ENCODE measurements at regions of chr12 and their contacts with region 1.

Region 1: GRCh38 chr12:119412811-119413794 is 78.6 kb downstream of the CCDC60 start:
- DNase-seq: peak; percentile 70
- ATAC-seq: no peak
- H3K4me3 Mint-ChIP-seq: no peak overlapping the region
- H3K27ac Mint-ChIP-seq: no peak overlapping the region
- H3K4me1 Mint-ChIP-seq: no peaks in the 10 kb centered on the region
- H3K27me3 Mint-ChIP-seq: peaks cover 18% of the 10 kb centered on the region

Region 2: DNA sequence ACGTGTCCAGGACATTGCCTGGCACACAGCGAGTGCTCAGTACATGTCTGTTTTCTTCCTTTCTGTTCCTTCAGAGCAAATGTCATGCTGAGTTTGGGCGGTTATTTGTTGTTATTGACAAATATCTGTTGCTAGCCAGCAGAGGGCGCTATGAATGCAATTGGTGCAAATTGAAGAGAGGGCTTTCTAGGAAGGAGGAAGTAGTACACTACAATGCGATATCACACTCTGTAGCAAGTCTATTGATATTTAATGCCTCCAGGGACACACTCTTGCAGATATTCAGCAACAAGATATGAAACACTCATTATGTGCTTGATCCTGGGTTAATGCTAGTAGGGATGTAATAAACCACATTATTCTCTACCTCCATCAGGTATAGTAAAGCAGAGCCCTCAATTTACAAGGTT is 699.0 kb before region 1 on chr12:
- CTCF ChIA-PET with region 1: no interaction called
- POLR2A ChIA-PET with region 1: no interaction called
- intact Hi-C with region 1: loop called in 1 of 2 experiments (anchors 10 kb)
- DNase-seq: peak; percentile 59
- ATAC-seq: no peak
- H3K4me3 Mint-ChIP-seq: no peak overlapping the region
- H3K27ac Mint-ChIP-seq: no peak overlapping the region
- H3K4me1 Mint-ChIP-seq: no peaks in the 10 kb centered on the region
- H3K27me3 Mint-ChIP-seq: peaks cover 2% of the 10 kb centered on the region

Region 3: GRCh38 chr12:118979763-118980406 is 433.2 kb before region 1 on chr12:
- CTCF ChIA-PET with region 1: interaction called, 3 read pairs
- POLR2A ChIA-PET with region 1: no interaction called
- intact Hi-C with region 1: loop called (anchors 1 to 10 kb)
- DNase-seq: peak; percentile 53
- ATAC-seq: peak; percentile 36
- H3K4me3 Mint-ChIP-seq: no peak overlapping the region
- H3K27ac Mint-ChIP-seq: no peak overlapping the region
- H3K4me1 Mint-ChIP-seq: no peaks in the 10 kb centered on the region
- H3K27me3 Mint-ChIP-seq: peaks cover 27% of the 10 kb centered on the region

Region 4: GRCh38 chr12:119115296-119115905 is 297.7 kb before region 1 on chr12:
- CTCF ChIA-PET with region 1: interaction called, 4 read pairs
- POLR2A ChIA-PET with region 1: no interaction called
- intact Hi-C with region 1: loop called (anchors 1 to 2 kb)
- DNase-seq: peak; percentile 43
- ATAC-seq: no peak
- H3K4me3 Mint-ChIP-seq: no peak overlapping the region
- H3K27ac Mint-ChIP-seq: no peak overlapping the region
- H3K4me1 Mint-ChIP-seq: no peaks in the 10 kb centered on the region
- H3K27me3 Mint-ChIP-seq: peaks cover 7% of the 10 kb centered on the region

Region 5: DNA sequence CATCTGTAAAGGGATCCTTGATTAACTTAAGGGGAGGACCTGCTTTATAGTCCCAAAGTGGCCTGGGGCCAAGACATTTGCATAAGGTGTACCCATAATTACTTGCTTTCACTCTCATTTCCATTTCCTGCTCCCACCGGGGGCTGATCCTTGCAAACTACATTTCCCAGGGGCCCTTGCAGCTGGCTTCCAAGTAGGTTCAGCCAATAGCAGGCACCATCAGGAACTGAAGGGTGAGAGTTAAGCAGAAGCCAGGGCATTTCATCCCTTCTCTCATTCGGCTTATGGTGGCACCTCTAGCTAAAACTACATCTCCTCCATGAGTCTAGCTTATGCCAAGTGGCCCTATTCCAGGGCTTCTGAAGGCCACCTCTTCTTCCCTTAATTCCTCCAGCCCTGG is 10.2 kb after region 1 on chr12:
- CTCF ChIA-PET with region 1: interaction called, 11 read pairs
- POLR2A ChIA-PET with region 1: no interaction called
- intact Hi-C with region 1: no loop called
- DNase-seq: peak; percentile 12
- ATAC-seq: no peak
- H3K4me3 Mint-ChIP-seq: no peak overlapping the region
- H3K27ac Mint-ChIP-seq: no peak overlapping the region
- H3K4me1 Mint-ChIP-seq: no peaks in the 10 kb centered on the region
- H3K27me3 Mint-ChIP-seq: peaks cover 22% of the 10 kb centered on the region

Region 6: DNA sequence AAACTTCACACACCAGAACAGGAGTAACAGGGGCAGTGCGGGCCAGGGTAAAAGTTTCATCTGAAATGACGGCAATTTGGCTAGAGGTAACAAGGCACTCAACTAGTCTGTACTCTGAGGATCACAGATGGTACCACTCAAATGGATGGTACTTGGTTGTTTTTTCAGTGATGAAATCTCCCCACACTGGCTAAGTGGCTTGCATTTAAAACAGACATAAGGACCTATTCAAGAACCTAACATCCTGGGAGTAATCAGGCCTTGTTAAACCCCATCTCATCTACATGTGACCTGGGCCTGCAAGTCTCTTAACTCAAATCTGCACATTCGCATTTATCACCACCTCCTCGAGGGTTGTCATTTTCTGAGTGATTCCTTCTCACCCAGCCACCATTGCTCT is 345.6 kb after region 1 on chr12:
- CTCF ChIA-PET with region 1: no interaction called
- POLR2A ChIA-PET with region 1: no interaction called
- intact Hi-C with region 1: no loop called
- DNase-seq: no peak
- ATAC-seq: no peak
- H3K4me3 Mint-ChIP-seq: no peak overlapping the region
- H3K27ac Mint-ChIP-seq: no peak overlapping the region
- H3K4me1 Mint-ChIP-seq: no peaks in the 10 kb centered on the region
- H3K27me3 Mint-ChIP-seq: no peaks in the 10 kb centered on the region

Measured in activated CD4-positive, alpha-beta T cell treated with anti-CD3 and anti-CD28 coated beads for 36 hours (primary cell).